Esophagus squamous epithelium (tissue), 5 donors: ENCODE measurements at regions of chr16 and their contacts with region 1.

Region 1: DNA sequence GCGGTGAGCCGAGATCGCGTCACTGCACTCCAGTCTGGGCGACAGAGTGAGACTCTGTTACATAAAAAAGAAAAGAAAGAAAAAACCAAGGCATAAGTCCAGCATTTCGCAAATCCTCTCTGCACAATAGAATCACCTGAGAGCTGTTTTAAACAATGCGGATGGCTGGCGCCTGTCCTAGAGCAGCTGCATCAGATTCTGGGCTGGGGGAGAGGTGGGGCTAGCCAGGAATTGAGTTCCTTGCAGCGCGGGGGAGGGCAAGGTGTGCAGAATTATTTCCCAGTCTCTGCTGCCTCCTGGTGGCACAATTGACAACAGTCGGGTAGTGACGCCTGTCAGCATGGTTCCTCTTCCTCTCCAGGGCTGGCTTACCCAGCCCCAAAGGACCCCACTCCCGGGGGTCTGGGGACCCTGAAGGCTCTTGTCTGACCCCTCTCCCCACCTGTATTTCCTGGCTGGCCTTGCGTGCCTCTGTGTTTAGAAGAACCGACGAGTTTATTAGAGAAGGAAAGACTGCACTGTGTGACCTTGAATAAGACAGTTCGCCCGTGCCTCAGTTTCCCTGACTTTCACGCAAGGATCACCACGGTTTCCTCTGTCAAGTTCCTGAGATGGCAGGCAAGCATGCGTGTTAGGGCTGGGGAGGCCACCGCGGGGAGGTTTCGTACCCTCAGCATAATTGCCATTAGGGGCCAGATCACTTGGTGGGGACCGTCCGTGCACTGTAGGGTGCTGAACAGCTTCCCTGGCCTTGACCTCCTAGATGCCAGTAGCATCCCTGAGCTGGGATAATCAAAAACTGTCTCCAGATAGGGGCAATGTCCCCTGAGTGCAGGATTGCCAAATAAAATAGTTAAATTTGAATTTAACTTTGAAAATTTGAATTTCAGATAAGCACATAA is 41.0 kb upstream of the PLCG2 start:
- DNase-seq: peak; percentile 25
- H3K4me3 ChIP-seq: peak overlapping the region in 3 of 4 donors; percentile 15 to 51 (median 29)
- H3K27ac ChIP-seq: peak overlapping the region; percentile 26 to 70 (median 68)
- H3K4me1 ChIP-seq: peaks cover 6 to 13% (median 8%) of the 10 kb centered on the region in 3 donors
- H3K27me3 ChIP-seq: no peaks in the 10 kb centered on the region
- CTCF ChIP-seq: peak; percentile 83 to 96 (median 94)
- POLR2A ChIP-seq: no peak

Region 2: DNA sequence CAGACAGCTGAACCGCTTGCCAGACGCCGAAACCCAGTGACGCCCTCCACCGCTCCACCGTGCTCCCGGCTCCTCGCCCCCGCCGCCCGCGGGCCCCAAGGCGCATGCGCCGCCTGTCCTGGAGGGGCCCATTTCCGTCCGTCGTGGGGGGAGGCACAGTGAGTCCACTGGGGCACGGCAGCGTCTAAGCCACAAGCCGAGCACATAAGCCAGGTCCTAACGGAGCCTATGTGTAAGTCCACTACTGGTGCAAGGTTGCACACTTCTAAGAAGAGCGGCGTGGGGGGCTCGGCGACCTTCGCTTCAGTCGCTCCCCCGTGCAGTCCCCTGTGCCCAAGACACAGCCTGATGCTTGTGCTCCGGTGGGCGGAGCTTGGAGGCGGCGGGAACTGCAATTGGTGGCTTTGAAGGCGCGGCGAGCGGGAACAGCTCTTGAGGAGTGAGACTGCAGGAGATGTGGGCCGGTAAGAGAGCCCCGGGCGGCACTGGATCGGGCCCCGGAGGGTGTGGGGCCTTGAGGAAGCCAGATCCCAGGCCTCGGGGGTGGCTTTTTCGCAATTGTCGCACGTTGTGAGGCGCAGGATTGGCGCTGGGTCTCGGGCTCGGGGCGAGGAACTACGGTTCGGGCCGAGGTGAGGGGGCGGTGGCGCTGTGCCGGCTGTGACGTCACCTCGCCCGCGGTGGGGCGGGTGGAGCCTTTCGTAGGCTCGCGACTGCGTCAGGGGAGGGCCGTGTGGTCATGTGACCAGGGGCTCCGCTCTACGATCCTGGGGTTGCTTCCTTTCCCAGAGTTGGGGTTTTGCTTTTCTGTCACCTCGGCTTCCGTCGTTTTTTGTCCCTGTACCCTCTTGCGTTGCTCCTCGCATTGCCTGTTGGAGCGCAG is 731.1 kb before region 1 on chr16 and contains the starts of genes CENPN and CMC2:
- intact Hi-C with region 1: loop called (anchors 10 kb)
- DNase-seq: peak; percentile 95
- H3K4me3 ChIP-seq: peak within 1 kb of the TSS; percentile 81 to 84 (median 83)
- H3K27ac ChIP-seq: peak within 1 kb of the TSS; percentile 97 to 100 (median 99)
- H3K4me1 ChIP-seq: peaks cover 0 to 40% (median 26%) of the 10 kb centered on the region in 3 donors
- H3K27me3 ChIP-seq: no peaks in the 10 kb centered on the region
- CTCF ChIP-seq: peak in 3 of 6 experiments; percentile 13 to 34 (median 24)
- POLR2A ChIP-seq: peak in 2 of 4 donors; percentile 74 to 96
- total RNA-seq, gene CENPN: 5.3 to 20.4 (median 16.1) TPM
- total RNA-seq, gene CMC2: 7.4 to 41.2 (median 24.4) TPM

Region 3: DNA sequence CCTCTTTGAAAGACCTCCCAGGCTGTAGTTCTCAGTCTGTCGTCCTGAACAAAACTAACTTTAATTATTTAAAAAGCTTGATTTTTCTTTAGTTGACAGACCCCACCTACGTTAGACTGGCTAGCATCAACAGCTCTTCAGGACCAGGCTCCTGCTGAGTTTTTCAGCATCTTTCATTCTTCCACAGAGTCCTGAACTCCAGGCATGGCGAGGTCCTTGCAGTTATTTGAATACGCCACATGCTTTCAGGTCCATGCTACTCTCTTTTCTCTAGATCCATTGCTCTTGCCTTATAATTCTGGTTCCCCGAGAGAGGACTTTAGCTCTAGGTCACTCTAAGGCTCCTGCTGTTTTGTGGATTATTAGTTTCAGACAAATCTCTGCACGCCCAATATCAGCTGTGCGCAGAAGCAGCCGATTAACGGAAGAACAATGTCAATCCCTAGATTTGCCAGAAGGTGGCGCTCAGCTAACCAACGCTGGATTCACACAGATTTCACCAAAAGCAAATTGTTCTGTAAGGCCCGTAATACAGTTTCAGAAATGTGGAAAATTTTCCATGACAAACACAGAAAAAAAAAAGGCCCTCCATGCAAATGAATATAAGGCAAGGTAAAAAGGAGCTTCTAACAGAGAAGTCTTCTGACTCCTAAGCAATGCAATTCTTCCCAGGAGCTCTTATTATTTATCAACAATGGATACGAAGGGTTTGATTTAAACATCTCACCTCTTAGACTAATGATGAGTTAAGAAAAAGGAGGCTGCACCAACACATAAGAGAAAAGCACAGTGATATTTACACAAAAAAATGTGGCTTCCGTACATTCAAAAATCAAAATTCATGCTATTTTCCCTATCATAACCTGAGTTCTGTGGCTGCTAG is 533.1 kb before region 1 on chr16:
- intact Hi-C with region 1: loop called (anchors 10 kb)
- DNase-seq: no peak
- H3K4me3 ChIP-seq: no peak overlapping the region
- H3K27ac ChIP-seq: no peak overlapping the region
- H3K4me1 ChIP-seq: peaks cover 0 to 7% (median 0%) of the 10 kb centered on the region in 3 donors
- H3K27me3 ChIP-seq: peaks cover 0 to 10% (median 0%) of the 10 kb centered on the region in 4 donors
- CTCF ChIP-seq: peak; percentile 31 to 75 (median 57)
- POLR2A ChIP-seq: no peak

Region 4: DNA sequence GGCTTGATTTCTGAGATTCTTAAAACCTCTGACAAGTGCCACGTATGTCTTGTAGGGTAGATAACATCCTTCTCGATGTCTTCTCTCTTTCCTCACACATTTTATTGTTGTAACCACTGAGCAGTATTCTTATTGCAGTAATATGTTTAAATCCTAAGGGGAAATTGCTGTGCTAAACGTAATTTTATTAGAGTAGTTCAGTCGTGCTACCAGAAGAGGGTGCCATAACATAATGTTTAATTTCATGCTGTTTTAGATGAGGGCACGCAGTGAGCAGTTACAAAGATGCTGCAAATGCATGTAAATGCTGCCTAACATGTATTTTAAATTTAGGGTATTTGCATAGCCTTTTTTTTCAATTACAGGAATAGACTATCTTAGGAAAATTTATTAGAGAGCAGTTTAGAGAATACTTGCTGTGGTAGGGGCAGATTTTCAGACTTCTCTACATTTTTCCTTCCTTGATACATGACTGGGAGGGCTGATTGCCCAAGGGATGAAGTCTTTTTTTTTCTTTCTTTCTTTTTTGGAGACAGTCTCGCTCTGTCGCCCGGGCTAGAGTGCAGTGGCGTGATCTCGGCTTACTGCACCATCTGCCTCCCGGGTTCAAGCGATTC is 371.7 kb before region 1 on chr16:
- intact Hi-C with region 1: loop called (anchors 10 kb)
- DNase-seq: no peak
- H3K4me3 ChIP-seq: no peak overlapping the region
- H3K27ac ChIP-seq: no peak overlapping the region
- H3K4me1 ChIP-seq: peaks cover 0 to 8% (median 0%) of the 10 kb centered on the region in 3 donors
- H3K27me3 ChIP-seq: no peaks in the 10 kb centered on the region
- CTCF ChIP-seq: peak; percentile 42 to 81 (median 66)
- POLR2A ChIP-seq: peak in 1 of 4 donors; percentile 27